ENCODE measurements at regions of chr16 and their contacts with region 1.

Region 1: DNA sequence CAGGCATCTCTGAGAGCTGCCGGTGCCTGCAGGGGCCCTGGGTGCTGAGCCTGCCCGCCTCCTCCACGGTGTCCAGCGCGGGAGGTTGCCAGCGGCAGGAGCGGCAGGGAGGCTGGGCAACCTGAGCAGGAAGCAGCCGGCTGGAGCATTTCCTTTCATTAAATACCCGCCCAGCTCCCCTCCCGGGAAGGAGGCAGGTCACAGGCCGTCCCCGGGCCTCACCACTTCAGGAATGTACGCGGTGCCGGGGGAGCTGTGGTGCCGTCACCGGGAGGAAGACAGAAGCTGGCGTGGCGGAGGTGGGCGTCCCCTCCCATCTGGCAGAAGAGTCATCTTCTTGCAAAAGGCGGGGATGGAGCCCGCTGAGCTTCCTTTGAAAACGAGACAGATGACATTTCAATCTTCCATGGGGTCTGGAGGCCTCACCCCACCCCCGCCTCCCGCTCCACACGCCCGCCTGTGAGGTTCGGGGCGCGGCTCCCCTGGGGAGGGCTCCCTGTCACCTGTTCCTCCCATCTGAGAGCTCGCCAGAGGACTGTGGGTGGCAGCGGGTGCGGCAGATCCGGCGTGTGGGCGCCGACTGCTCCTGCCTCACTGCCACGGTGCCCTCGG is 16.0 kb downstream of the SOX8 start:
- DNase-seq: peak; percentile 27 to 84 (median 63)
- ATAC-seq: peak; percentile 78
- H3K4me3 ChIP-seq: peak overlapping the region; percentile 67
- H3K4me3 Mint-ChIP-seq: peak overlapping the region; percentile 88
- H3K27ac ChIP-seq: peak overlapping the region; percentile 57 to 80
- H3K27ac Mint-ChIP-seq: peak overlapping the region; percentile 88
- H3K4me1 ChIP-seq: peaks cover 75% of the 10 kb centered on the region
- H3K4me1 Mint-ChIP-seq: peaks cover 44% of the 10 kb centered on the region
- H3K27me3 ChIP-seq: no peaks in the 10 kb centered on the region
- H3K27me3 Mint-ChIP-seq: no peaks in the 10 kb centered on the region
- CTCF ChIP-seq: no peak

Region 2: DNA sequence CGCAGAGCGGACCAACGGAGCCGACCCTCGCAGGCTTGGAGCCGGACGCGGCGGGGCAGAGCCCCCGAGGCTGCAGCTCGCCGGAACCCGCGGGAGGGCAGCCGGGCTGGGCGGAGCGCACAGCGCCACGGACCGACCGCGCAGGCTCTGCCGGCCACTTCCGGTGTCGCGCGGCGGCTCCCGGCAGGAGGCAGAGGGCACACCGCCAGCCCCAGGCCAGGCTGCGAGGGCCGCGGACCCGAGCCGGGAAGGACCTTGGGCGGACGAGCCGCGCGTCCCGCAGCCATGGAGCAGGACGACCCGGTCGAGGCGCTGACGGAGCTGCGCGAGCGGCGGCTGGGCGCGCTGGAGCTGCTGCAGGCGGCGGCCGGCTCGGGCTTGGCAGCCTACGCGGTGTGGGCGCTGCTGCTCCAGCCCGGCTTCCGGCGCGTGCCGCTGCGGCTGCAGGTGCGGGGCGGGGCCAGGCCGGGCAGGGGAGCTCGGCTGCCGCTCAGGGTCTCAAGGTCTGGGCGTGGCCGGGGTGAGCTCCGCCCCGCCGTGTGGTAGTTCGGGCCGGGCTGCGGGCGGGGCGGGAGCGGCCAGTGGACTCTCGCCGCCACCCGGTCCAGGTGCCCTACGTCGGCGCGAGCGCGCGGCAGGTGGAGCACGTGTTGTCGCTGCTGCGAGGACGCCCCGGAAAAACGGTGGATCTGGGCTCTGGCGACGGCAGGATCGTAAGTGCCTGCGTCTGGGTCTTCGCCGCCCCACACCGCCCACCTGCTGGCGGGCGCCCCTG is 276.4 kb before region 1 on chr16 and contains the start of gene ANTKMT:
- CTCF ChIA-PET with region 1: no interaction called
- POLR2A ChIA-PET with region 1: no interaction called
- intact Hi-C with region 1: no loop called
- DNase-seq: peak; percentile 31 to 89 (median 63)
- ATAC-seq: peak; percentile 75
- H3K4me3 ChIP-seq: peak within 1 kb of the TSS; percentile 63
- H3K4me3 Mint-ChIP-seq: peak within 1 kb of the TSS; percentile 87
- H3K27ac ChIP-seq: peak within 1 kb of the TSS in 1 of 2 donors; percentile 35
- H3K27ac Mint-ChIP-seq: peak within 1 kb of the TSS; percentile 68
- H3K4me1 ChIP-seq: peaks cover 47% of the 10 kb centered on the region
- H3K4me1 Mint-ChIP-seq: peaks cover 20% of the 10 kb centered on the region
- H3K27me3 ChIP-seq: peaks cover 2 to 7% of the 10 kb centered on the region in 2 experiments
- H3K27me3 Mint-ChIP-seq: no peaks in the 10 kb centered on the region
- CTCF ChIP-seq: no peak
- total RNA-seq, gene ANTKMT: 8.1 TPM

Region 3: GRCh38 chr16:964356-965042 is 33.0 kb before region 1 on chr16:
- CTCF ChIA-PET with region 1: interaction called, 5 read pairs
- POLR2A ChIA-PET with region 1: interaction called, 18 read pairs
- intact Hi-C with region 1: no loop called
- DNase-seq: peak; percentile 69 to 96 (median 73)
- ATAC-seq: peak; percentile 92
- H3K4me3 ChIP-seq: peak overlapping the region; percentile 49
- H3K4me3 Mint-ChIP-seq: peak overlapping the region; percentile 81
- H3K27ac ChIP-seq: peak overlapping the region; percentile 32 to 61
- H3K27ac Mint-ChIP-seq: peak overlapping the region; percentile 84
- H3K4me1 ChIP-seq: peaks cover 45% of the 10 kb centered on the region
- H3K4me1 Mint-ChIP-seq: peaks cover 52% of the 10 kb centered on the region
- H3K27me3 ChIP-seq: no peaks in the 10 kb centered on the region
- H3K27me3 Mint-ChIP-seq: no peaks in the 10 kb centered on the region
- CTCF ChIP-seq: no peak

Region 4: DNA sequence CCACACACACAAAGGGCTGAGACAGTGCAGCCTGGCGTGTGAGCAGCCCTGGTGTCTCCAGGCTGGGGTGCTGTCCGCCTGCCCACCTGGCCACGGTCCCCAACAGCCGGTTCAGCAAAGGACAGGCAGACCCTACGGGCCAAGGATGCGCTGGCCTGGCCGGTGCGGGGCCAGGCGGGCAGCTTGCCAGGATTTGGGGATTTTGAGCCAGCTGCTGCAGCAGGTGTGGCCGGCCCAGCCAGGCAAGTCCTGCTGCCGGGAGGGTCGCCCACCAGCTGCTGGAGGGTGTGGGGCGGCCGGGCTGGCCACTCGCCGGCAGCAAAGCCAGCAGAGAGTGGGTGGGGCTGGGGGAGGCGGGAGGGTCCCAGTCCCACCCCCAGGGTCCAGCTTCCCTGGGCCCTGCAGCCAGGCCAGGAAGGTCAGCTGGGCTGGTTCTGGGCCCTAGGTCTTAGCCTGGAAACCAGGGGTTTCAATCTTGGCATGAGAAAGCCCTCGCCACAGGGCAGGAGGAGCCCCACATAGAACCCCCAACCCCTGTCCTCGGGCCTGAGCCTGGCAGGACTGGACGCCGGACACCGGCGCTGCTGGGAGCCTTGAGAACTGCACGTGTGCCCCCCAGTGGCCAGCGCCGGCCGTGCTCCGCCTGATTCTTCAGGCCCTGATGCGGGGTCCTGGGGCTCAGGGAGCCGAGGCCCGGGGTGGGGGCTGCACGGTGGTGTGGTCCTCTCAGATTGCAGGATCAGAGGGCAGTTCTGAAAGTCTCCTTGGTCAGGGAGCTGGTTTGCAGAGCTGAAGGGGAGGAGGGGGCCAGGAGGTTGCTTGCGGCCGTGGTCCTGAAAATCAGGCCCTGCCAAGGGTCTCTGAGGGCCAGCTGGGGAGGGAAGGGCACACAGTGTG is 57.4 kb after region 1 on chr16:
- CTCF ChIA-PET with region 1: interaction called, 5 read pairs
- POLR2A ChIA-PET with region 1: no interaction called
- intact Hi-C with region 1: loop called in 1 of 2 experiments (anchors 1 kb)
- DNase-seq: peak in 11 of 14 experiments; percentile 12 to 63 (median 28)
- ATAC-seq: no peak
- H3K4me3 ChIP-seq: no peak overlapping the region
- H3K4me3 Mint-ChIP-seq: no peak overlapping the region
- H3K27ac ChIP-seq: no peak overlapping the region
- H3K27ac Mint-ChIP-seq: no peak overlapping the region
- H3K4me1 ChIP-seq: peaks cover 11% of the 10 kb centered on the region
- H3K4me1 Mint-ChIP-seq: no peaks in the 10 kb centered on the region
- H3K27me3 ChIP-seq: peaks cover 0 to 8% of the 10 kb centered on the region in 2 experiments
- H3K27me3 Mint-ChIP-seq: peaks cover 4% of the 10 kb centered on the region
- CTCF ChIP-seq: peak; percentile 66

Measured in CD4-positive, alpha-beta T cell (primary cell).